Head of caudate nucleus (tissue), 42 donors: ENCODE measurements at regions of chr11 and their contacts with region 1.

Region 1: DNA sequence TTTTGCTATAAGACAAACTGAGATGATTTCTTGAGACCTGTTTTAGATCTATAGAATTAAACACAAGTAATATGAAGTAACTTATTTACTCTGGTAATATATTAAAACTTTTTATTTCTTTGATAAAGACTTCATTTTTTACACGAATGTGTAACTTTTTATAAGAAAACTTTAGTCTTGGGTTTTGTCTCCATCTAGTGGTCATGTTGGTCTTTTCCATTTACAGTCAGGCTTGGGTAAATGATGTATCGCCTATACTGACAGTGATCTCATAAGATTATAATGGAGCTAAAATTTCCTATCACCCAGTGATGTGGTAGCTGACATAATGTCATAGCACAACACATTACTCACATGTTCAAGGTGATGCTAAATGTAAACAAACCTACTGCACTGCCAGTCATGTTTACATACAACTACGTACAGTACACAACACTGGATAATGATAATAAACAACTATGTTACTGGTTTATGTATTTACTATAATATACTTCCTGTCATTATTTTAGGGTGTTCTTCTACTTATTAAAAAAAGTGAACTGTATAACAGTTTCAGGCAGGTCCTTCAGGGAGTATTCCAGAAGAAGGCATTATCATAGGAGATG is 7.5 kb upstream of the C11orf97 start:
- DNase-seq: peak in 1 of 42 donors; percentile 33

Region 2: DNA sequence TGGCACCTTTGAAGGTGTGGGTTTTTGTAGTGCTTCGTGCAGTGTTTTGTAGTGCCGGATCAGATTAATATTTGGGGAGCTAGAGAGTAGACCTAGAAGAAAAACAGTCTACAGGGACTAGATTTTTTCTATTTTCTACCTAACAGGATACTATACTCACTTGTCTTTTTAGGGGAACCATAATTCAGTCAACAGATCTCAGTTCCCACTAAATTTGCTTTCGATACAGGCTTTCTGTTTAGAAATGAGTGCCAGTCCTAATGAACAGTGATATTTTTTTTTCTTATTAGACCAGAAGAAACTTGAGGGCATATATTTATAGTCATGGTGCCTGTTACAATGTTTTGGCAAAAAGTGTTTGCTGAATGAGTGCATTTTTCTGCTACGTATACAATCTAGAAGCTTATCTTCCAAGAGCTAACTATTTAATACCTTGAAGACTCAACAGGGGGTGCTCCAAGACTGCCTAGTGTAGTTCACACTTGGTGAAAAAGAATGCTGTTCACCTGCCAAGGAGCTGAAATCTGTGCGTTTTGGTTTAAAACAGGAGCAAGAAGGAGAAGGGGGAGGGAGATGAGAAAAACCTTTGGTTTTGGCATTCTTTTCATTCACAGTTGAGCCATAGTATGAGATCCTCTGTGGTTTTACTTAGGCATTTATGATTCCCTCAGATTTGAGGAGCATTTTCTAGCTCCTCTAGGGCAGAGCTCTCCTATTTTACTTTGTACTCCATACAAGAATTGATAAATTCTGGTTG is 609.5 kb before region 1 on chr11:
- intact Hi-C with region 1: loop called (anchors 10 kb)
- DNase-seq: peak in 25 of 42 donors; percentile 9 to 74 (median 33)